OCI-LY7 (cell line): ENCODE measurements at regions of chr16 and their contacts with region 1.

Region 1: GRCh38 chr16:53886482-53887378 is 182.8 kb downstream of the FTO start:
- DNase-seq: no peak
- H3K4me3 ChIP-seq: no peak overlapping the region
- H3K27ac ChIP-seq: no peak overlapping the region
- H3K4me1 ChIP-seq: no peaks in the 10 kb centered on the region
- CTCF ChIP-seq: no peak

Region 2: GRCh38 chr16:53041320-53042051 is 845.2 kb before region 1 on chr16:
- CTCF ChIA-PET with region 1: interaction called, 13 read pairs
- POLR2A ChIA-PET with region 1: no interaction called
- intact Hi-C with region 1: no loop called
- DNase-seq: no peak
- H3K4me3 ChIP-seq: no peak overlapping the region
- H3K27ac ChIP-seq: no peak overlapping the region
- H3K4me1 ChIP-seq: no peaks in the 10 kb centered on the region
- CTCF ChIP-seq: no peak

Region 3: DNA sequence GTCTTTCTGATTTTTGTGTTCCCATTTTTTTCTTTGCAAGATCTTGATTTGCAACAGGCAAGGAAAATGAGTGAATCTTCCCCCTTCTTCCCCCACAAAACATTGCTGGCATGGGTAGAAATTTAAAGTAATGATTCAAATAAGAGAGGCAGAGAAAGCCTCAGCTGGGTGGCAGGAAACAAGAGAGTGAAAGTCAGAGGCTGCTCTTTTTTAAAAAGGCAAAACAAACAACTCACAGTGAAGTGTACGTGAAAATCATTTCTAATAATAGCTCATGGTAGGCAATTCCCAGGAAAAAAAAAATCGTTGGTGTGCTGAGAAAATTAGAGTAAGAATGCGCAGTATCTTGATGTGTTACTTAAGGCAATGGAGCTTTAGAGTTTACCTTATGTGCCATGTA is 46.7 kb after region 1 on chr16:
- CTCF ChIA-PET with region 1: no interaction called
- POLR2A ChIA-PET with region 1: no interaction called
- intact Hi-C with region 1: no loop called
- DNase-seq: no peak
- H3K4me3 ChIP-seq: no peak overlapping the region
- H3K27ac ChIP-seq: no peak overlapping the region
- H3K4me1 ChIP-seq: no peaks in the 10 kb centered on the region
- CTCF ChIP-seq: no peak

Region 4: DNA sequence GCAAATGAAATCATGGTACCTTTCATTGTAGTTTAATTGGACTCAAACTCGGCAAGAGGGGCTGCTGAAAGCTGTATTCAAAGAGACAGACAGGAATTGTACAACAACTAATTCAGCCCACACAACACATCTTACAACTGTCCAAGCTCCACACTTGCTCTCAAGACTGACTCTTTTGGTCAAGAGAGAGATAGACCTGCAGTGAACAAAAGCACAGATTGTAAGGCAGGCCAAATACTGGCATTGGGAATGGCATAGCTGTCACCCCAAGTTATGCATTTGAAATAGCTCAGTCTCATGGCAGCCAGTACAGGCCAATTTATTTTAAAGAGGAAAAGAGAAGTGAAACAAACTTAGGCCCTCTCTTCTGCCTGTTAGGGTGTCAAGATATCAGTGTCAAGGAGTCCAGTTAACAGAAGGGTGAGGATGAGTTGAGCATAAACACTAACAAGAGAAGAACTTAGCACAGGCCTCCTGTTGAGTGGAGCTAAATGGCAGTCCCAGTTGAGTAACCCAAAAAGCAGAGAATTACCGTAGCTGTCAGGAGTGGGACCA is 184.1 kb after region 1 on chr16:
- CTCF ChIA-PET with region 1: no interaction called
- POLR2A ChIA-PET with region 1: no interaction called
- intact Hi-C with region 1: no loop called
- DNase-seq: no peak
- H3K4me3 ChIP-seq: no peak overlapping the region
- H3K27ac ChIP-seq: no peak overlapping the region
- H3K4me1 ChIP-seq: no peaks in the 10 kb centered on the region
- CTCF ChIP-seq: no peak